ENCODE measurements at regions of chr6 and their contacts with region 1.

Region 1: GRCh38 chr6:42726485-42727086 is 4.2 kb upstream of the PRPH2 start:
- DNase-seq: peak; percentile 79
- ATAC-seq: peak; percentile 95 to 96

Region 2: GRCh38 chr6:42879372-42880239 is 153.0 kb after region 1 on chr6 and contains the start of gene RPL7L1:
- intact Hi-C with region 1: loop called in 1 of 2 experiments (anchors 10 kb)
- DNase-seq: peak; percentile 81
- ATAC-seq: peak; percentile 97 to 98
- total RNA-seq, gene RPL7L1: 50.8 to 60.8 TPM